ENCODE measurements at regions of chr3 and their contacts with region 1.

Region 1: GRCh38 chr3:123559040-123559861 is 25.6 kb downstream of the HACD2 start:
- DNase-seq: peak; percentile 57
- H3K4me3 Mint-ChIP-seq: no peak overlapping the region
- H3K27ac Mint-ChIP-seq: no peak overlapping the region
- H3K4me1 Mint-ChIP-seq: peaks cover 11% of the 10 kb centered on the region
- H3K27me3 Mint-ChIP-seq: no peaks in the 10 kb centered on the region
- CTCF ChIP-seq: peak; percentile 72

Region 2: GRCh38 chr3:123267821-123268220 is 291.4 kb before region 1 on chr3:
- CTCF ChIA-PET with region 1: no interaction called
- POLR2A ChIA-PET with region 1: no interaction called
- intact Hi-C with region 1: no loop called
- DNase-seq: no peak
- H3K4me3 Mint-ChIP-seq: no peak overlapping the region
- H3K27ac Mint-ChIP-seq: no peak overlapping the region
- H3K4me1 Mint-ChIP-seq: no peaks in the 10 kb centered on the region
- H3K27me3 Mint-ChIP-seq: no peaks in the 10 kb centered on the region
- CTCF ChIP-seq: no peak

Region 3: DNA sequence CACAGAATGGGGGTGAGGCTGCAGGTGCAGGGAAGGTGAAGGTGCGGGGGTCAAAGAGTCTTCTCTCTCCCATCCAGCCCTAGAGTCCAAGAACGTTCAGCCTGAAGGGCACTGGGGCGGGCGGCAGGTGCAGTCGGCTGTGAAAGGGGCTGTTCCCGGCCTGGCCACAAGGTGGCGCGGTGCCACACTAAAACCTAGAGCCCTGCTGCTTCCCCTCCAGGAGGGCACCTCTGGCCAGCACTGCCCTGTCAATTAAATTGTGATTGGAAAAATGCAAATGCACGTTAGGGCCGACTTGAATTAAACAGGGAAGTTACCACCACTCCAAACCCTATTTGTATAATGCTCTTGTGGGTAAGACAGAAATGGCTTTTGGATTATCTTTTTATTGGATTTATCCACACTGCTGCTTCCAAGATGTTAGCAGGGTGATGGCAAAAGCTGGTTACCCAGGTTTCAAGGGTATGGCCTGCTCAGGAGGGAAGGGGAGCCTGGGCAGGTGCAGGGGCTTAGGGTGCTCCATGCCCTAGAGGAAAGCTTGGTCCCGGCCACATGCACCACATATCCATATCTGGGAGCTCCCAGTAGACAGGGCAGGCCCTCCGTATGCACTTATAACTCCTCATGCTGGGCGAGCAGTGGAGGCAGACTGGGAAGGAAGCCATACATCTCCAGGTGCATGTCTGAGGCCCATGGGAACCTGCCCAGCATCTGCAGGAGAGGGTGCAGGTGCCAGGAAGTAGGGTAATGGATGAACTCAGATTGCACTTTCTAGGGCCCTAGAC is 230.2 kb before region 1 on chr3:
- CTCF ChIA-PET with region 1: interaction called, 9 read pairs
- POLR2A ChIA-PET with region 1: interaction called, 5 read pairs
- intact Hi-C with region 1: loop called (anchors 2 kb)
- DNase-seq: peak; percentile 64
- H3K4me3 Mint-ChIP-seq: no peak overlapping the region
- H3K27ac Mint-ChIP-seq: no peak overlapping the region
- H3K4me1 Mint-ChIP-seq: peaks cover 8% of the 10 kb centered on the region
- H3K27me3 Mint-ChIP-seq: peaks cover 35% of the 10 kb centered on the region
- CTCF ChIP-seq: peak; percentile 87

Region 4: DNA sequence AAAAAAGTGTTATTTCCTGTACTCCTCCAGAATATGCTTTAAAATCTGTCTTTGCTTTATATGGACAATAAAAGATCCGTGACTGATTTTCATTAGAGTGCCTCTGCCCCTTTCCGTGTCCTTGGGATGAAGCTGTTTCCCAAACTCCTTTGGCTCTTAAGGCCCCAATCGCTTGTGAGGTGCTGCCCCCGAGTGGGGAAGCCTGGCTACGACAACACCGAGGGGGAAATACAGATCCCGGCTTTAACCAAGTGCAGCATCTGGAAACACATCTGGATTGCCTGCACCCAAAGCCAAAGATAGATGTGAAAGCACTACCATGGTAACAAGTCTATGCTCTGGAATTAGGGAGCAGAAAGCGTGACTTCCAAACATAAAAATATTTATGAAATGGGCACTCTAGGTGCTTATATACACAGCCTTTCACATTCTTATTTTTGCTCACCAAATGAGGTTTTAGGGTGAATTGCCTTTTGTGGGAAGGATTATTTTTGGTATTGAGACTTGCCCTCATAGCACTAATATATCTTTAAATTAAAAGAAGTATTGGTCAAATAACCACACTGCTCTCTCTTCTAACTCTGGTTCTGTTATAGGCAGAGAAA is 69.7 kb before region 1 on chr3:
- CTCF ChIA-PET with region 1: interaction called, 5 read pairs
- POLR2A ChIA-PET with region 1: no interaction called
- intact Hi-C with region 1: loop called (anchors 2 kb)
- DNase-seq: peak; percentile 61
- H3K4me3 Mint-ChIP-seq: no peak overlapping the region
- H3K27ac Mint-ChIP-seq: no peak overlapping the region
- H3K4me1 Mint-ChIP-seq: no peaks in the 10 kb centered on the region
- H3K27me3 Mint-ChIP-seq: no peaks in the 10 kb centered on the region
- CTCF ChIP-seq: peak; percentile 78

Region 5: GRCh38 chr3:123521179-123521969 is 37.9 kb before region 1 on chr3:
- CTCF ChIA-PET with region 1: interaction called, 17 read pairs
- POLR2A ChIA-PET with region 1: no interaction called
- intact Hi-C with region 1: no loop called
- DNase-seq: peak; percentile 3
- H3K4me3 Mint-ChIP-seq: no peak overlapping the region
- H3K27ac Mint-ChIP-seq: no peak overlapping the region
- H3K4me1 Mint-ChIP-seq: peaks cover 18% of the 10 kb centered on the region
- H3K27me3 Mint-ChIP-seq: no peaks in the 10 kb centered on the region
- CTCF ChIP-seq: no peak

Region 6: GRCh38 chr3:123535580-123535979 is 23.7 kb before region 1 on chr3:
- CTCF ChIA-PET with region 1: interaction called, 14 read pairs
- POLR2A ChIA-PET with region 1: no interaction called
- intact Hi-C with region 1: no loop called
- DNase-seq: peak; percentile 4
- H3K4me3 Mint-ChIP-seq: no peak overlapping the region
- H3K27ac Mint-ChIP-seq: no peak overlapping the region
- H3K4me1 Mint-ChIP-seq: peaks cover 20% of the 10 kb centered on the region
- H3K27me3 Mint-ChIP-seq: no peaks in the 10 kb centered on the region
- CTCF ChIP-seq: no peak

Region 7: GRCh38 chr3:123546133-123546755 is 13.0 kb before region 1 on chr3:
- CTCF ChIA-PET with region 1: interaction called, 30 read pairs
- POLR2A ChIA-PET with region 1: interaction called, 3 read pairs
- intact Hi-C with region 1: no loop called
- DNase-seq: peak; percentile 8
- H3K4me3 Mint-ChIP-seq: no peak overlapping the region
- H3K27ac Mint-ChIP-seq: no peak overlapping the region
- H3K4me1 Mint-ChIP-seq: peaks cover 6% of the 10 kb centered on the region
- H3K27me3 Mint-ChIP-seq: no peaks in the 10 kb centered on the region
- CTCF ChIP-seq: no peak

Region 8: DNA sequence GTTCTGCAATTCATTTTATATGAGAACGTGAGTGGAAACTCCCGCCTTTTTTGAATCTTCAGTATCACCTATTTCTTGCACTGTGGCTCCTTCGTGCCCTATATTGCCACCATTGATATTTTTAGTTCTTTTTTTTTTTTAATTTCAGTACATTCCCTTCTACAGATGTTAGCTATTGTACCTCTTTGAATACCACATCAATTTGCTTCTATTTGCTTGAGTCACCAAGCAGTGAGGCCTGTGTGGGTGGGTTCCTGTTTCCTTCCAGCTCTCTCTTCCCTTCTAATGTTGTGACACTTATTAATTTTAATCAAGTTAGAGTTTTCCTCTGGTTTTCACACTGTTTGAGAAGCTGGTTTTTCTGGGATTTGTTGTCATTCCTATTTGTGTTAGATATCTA is 16.9 kb after region 1 on chr3:
- CTCF ChIA-PET with region 1: interaction called, 62 read pairs
- POLR2A ChIA-PET with region 1: interaction called, 17 read pairs
- intact Hi-C with region 1: no loop called
- DNase-seq: no peak
- H3K4me3 Mint-ChIP-seq: no peak overlapping the region
- H3K27ac Mint-ChIP-seq: no peak overlapping the region
- H3K4me1 Mint-ChIP-seq: peaks cover 15% of the 10 kb centered on the region
- H3K27me3 Mint-ChIP-seq: no peaks in the 10 kb centered on the region
- CTCF ChIP-seq: no peak